AG04449 (cell line): ENCODE measurements at regions of chr4 and their contacts with region 1.

Region 1: DNA sequence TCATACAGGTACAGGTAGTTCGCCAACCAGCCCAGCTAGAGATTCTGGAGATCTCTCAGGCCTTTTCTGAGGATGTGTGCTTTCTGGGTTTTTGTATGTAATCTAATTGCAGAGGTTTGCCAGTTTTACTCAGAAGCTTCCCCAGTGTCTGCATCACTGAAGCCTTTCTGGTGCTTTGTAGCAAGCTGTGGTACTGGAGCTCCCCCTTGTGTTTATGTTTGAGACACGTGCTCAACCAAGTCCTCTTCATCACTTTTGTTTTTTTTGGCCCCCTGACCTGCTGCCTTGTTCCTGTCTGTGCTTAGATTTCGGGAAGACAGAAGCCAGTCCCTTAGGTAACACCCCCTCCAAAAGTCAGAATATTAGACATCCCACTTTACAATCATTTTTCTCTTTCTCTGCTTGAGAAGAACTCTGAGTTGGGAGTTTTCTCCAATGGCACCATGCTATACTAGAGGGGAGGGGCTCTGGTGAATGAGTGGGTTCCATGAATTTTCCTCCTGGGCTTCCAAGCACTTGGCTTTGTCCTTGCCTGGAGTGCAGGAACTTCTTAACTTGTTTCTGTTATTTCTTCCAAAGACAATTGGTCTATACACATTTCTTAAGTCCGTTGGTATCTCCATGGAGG is 128.4 kb upstream of the TBC1D9 start:
- DNase-seq: no peak
- H3K4me3 ChIP-seq: no peak overlapping the region
- CTCF ChIP-seq: peak; percentile 68

Region 2: GRCh38 chr4:140626661-140627376 is 257.7 kb before region 1 on chr4:
- CTCF ChIA-PET with region 1: no interaction called
- POLR2A ChIA-PET with region 1: no interaction called
- DNase-seq: no peak
- H3K4me3 ChIP-seq: no peak overlapping the region
- CTCF ChIP-seq: no peak

Region 3: DNA sequence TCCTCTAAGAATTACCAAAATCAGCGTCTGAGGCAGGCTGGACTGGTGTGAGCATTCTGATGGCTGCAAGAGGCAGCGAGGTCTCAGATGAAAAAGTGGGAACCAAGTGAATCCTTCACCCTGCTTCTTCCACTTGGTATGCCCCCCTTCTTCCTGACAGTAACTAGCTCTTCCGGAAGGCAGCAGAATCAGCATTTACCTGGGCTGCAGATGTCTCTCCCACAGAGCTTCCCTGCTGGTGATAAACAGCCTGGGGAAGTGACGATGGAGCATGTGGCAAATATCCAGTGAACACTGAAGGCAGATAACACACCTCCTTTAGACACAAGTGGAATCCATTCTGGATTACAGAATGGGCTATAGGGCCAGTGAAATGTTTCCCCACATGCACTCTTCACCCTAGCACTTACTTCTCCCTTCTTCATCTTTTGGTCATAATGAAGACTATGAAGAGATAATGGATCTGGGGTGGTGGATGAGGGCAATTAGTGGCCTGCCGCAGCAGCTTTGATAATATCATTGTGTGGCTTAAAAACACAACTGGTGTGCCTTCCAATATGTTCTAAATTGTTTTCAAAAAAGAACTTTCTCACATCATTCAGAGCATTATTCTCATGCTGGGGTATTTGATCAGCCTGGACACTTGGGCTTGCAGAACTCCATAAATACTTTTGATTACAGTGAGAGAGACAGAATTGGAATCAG is 67.6 kb before region 1 on chr4:
- CTCF ChIA-PET with region 1: no interaction called
- POLR2A ChIA-PET with region 1: no interaction called
- DNase-seq: no peak
- H3K4me3 ChIP-seq: no peak overlapping the region
- CTCF ChIP-seq: no peak

Region 4: GRCh38 chr4:140903522-140904475 is 19.3 kb after region 1 on chr4:
- CTCF ChIA-PET with region 1: interaction called, 14 read pairs
- POLR2A ChIA-PET with region 1: no interaction called
- DNase-seq: no peak
- H3K4me3 ChIP-seq: no peak overlapping the region
- CTCF ChIP-seq: no peak

Region 5: DNA sequence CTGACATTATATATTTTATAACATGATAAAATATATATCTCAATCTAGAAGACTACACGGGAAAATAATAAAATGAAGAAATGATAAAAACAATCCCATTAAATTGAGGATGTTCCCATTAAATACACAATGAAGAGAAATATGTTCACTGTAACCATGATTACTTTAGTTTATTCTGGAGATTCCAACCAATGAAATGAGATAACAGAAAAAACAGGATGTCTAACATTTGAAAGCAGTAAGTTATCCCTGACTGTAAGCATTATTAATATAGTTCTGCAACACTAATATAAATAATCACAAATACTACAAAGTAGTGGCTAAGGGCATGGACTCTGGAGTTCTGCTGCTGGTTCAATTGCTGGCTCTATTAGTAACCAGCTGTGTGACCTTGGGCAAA is 79.3 kb after region 1 on chr4:
- CTCF ChIA-PET with region 1: no interaction called
- POLR2A ChIA-PET with region 1: no interaction called
- DNase-seq: no peak
- H3K4me3 ChIP-seq: no peak overlapping the region
- CTCF ChIP-seq: no peak